ENCODE measurements at regions of chr4 and their contacts with region 1.

Region 1: GRCh38 chr4:87848622-87849351 is 16.0 kb downstream of the MEPE start:
- DNase-seq: peak; percentile 12 to 42
- H3K4me3 ChIP-seq: peak overlapping the region; percentile 37; the same call in 1 of the 2 replicates
- H3K27ac ChIP-seq: no peak overlapping the region
- H3K4me1 ChIP-seq: peaks cover 6% of the 10 kb centered on the region
- H3K27me3 ChIP-seq: no peaks in the 10 kb centered on the region
- CTCF ChIP-seq: peak; percentile 65; the same call in 1 of the 2 replicates

Region 2: DNA sequence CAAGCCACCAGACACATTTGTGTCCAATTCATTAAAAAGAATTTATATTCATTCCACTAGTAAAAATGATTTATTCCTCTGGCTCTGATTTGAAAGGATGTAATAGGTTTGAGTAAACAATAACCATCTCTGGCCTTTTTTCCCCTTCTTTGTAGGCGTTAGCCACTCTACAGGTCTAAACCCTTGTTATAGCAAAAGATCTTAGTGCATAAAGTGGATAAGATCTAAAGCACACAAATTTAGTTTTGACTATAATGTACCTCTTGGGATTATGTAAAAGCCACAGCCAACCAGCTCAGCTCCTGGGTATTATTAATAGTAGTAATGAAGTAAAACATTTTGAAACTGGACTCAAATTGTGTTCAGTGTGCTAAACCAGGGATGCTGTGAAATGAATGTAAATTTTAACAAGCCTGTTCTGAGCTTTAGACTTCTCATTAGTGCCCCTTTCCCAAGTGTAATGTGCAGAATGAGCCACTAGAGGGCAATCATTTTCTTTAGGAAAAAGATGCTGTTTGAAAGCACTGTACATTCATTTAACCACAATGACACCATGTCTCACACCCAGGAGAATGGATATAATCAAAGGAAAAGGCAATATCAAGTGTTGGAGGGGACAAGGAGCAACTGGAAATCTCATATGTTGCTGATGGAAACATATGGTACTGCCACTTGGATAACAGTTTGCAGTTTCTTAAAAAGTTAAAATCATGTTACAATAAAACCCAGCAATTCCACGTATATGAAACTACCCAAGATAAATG is 698.1 kb before region 1 on chr4:
- CTCF ChIA-PET with region 1: no interaction called
- POLR2A ChIA-PET with region 1: no interaction called
- intact Hi-C with region 1: loop called (anchors 5 kb)
- DNase-seq: peak; percentile 16 to 38
- H3K4me3 ChIP-seq: no peak overlapping the region
- H3K27ac ChIP-seq: no peak overlapping the region
- H3K4me1 ChIP-seq: no peaks in the 10 kb centered on the region
- H3K27me3 ChIP-seq: no peaks in the 10 kb centered on the region
- CTCF ChIP-seq: peak; percentile 91

Region 3: GRCh38 chr4:87375719-87376291 is 473.0 kb before region 1 on chr4:
- CTCF ChIA-PET with region 1: no interaction called
- POLR2A ChIA-PET with region 1: no interaction called
- intact Hi-C with region 1: loop called (anchors 2 kb)
- DNase-seq: no peak
- H3K4me3 ChIP-seq: no peak overlapping the region
- H3K27ac ChIP-seq: no peak overlapping the region
- H3K4me1 ChIP-seq: no peaks in the 10 kb centered on the region
- H3K27me3 ChIP-seq: no peaks in the 10 kb centered on the region
- CTCF ChIP-seq: peak; percentile 64

Region 4: DNA sequence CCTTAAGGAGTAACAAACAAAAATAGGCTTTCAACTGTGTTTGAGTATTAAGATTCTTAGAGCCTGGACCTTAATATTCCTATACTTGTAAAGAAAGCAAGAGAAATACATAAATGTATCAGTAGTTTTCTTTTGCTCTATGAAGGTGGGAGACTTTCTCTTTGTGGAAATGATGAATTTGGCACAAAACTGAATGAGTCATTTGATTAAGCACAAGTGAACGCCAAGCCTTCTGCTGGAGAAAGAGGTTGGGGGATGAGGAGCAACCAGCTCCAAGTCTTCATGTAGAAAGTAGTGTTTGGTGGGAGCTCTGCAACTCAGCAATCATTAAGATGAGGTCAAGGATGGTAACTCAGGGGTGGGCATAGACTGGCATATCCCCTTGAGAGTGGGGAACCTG is 33.5 kb after region 1 on chr4:
- CTCF ChIA-PET with region 1: no interaction called
- POLR2A ChIA-PET with region 1: no interaction called
- intact Hi-C with region 1: no loop called
- DNase-seq: no peak
- H3K4me3 ChIP-seq: no peak overlapping the region
- H3K27ac ChIP-seq: no peak overlapping the region
- H3K4me1 ChIP-seq: no peaks in the 10 kb centered on the region
- H3K27me3 ChIP-seq: no peaks in the 10 kb centered on the region
- CTCF ChIP-seq: no peak

Region 5: GRCh38 chr4:87985097-87985886 is 136.5 kb after region 1 on chr4:
- CTCF ChIA-PET with region 1: interaction called, 21 read pairs
- POLR2A ChIA-PET with region 1: no interaction called
- intact Hi-C with region 1: loop called (anchors 1 kb)
- DNase-seq: peak; percentile 35 to 56
- H3K4me3 ChIP-seq: no peak overlapping the region
- H3K27ac ChIP-seq: no peak overlapping the region
- H3K4me1 ChIP-seq: no peaks in the 10 kb centered on the region
- H3K27me3 ChIP-seq: no peaks in the 10 kb centered on the region
- CTCF ChIP-seq: peak; percentile 69

Region 6: DNA sequence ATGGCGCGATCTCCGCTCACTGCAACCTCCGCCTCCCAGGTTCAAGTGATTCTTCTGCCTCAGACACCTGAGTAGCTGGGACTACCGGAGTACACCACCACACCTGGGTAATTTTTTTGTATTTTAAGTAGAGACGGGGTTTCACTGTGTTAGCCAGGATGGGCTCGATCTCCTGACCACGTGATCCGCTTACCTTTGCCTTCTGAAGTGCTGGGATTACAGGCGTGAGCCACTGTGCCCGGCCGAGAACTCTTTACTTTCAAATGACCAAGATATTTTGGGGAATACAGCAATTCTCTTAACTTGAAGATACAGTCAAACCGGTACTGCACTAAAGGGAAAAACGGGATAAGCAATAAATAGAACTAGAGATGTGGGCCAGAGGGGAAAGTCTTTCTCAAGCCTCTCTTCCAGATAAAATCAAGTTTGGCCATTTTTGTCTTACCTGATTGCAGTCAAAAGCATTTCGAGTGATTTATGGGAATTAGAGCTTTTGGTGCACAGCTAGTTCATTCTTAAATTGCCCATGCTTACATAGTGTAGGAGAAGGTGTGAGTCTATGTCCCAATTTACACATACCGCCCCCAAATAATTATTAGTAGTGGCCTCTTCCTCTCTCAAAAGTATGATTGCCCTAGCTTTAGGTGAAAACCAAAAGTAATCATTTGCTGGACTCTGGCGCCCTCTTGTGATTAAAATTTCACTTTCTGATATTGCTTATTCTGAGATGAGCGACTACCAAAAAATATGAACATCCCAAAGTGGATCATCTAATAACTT is 362.9 kb after region 1 on chr4:
- CTCF ChIA-PET with region 1: interaction called, 4 read pairs
- POLR2A ChIA-PET with region 1: no interaction called
- intact Hi-C with region 1: loop called (anchors 1 kb)
- DNase-seq: peak; percentile 37 to 39
- H3K4me3 ChIP-seq: no peak overlapping the region
- H3K27ac ChIP-seq: no peak overlapping the region
- H3K4me1 ChIP-seq: peaks cover 6% of the 10 kb centered on the region
- H3K27me3 ChIP-seq: no peaks in the 10 kb centered on the region
- CTCF ChIP-seq: peak; percentile 78

Measured in PC-9 (cell line).